ENCODE measurements at regions of chr4 and their contacts with region 1.

Region 1: DNA sequence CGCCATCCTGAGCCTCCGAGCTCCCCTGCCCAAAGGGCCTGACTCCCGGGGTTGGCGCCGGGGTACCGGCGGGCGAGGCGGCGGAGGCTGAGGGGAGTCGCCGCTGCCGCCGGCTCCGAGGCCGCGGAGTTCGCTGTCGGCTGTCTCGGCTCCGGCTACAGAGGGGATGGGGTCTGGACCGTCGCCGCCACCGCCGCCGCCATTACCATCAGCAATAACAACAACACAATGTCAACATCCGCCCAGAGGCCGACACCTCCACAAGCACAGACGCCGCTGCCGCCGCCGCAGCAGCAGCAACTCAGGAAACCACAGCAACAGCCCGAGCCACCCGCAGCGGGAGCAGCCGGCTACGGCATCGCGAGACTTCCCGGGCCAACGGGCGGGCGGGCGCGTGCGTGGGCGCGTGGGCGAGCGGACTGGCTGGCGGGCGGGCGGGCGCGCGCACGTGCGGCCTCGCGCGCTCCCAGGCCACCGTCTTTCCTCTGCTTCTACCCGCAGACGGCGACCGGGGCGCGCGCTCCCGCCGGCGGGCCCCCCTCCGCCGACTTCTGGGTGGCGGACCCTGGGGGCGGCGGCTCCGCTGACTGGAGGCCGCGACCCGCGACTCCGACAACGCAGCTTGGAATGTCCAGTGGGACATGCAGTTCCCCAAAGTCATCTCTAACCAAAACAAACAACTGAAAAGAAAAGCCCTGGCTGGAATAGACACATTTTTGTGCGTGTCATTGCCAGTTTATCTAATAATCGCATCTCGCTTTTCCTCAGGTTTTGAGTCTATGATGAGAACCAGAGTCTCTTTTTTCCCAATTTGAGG is at the start of gene CHIC2:
- DNase-seq: peak; percentile 94 to 99 (median 97)
- ATAC-seq: peak; percentile 86
- H3K4me3 ChIP-seq: peak within 1 kb of the TSS; percentile 91 to 99
- H3K4me3 Mint-ChIP-seq: peak within 1 kb of the TSS; percentile 96
- H3K27ac ChIP-seq: peak within 1 kb of the TSS; percentile 87 to 99
- H3K27ac Mint-ChIP-seq: peak within 1 kb of the TSS; percentile 99
- H3K4me1 ChIP-seq: peaks cover 35% of the 10 kb centered on the region
- H3K4me1 Mint-ChIP-seq: peaks cover 49% of the 10 kb centered on the region
- H3K27me3 ChIP-seq: no peaks in the 10 kb centered on the region
- H3K27me3 Mint-ChIP-seq: no peaks in the 10 kb centered on the region
- CTCF ChIP-seq: no peak
- total RNA-seq, gene CHIC2: 67.3 to 69.3 TPM

Region 2: GRCh38 chr4:52712172-52712990 is 1352.1 kb before region 1 on chr4:
- CTCF ChIA-PET with region 1: no interaction called
- POLR2A ChIA-PET with region 1: no interaction called
- intact Hi-C with region 1: loop called in 1 of 2 experiments (anchors 10 kb)
- DNase-seq: peak; percentile 90 to 97 (median 95)
- ATAC-seq: peak; percentile 89
- H3K4me3 ChIP-seq: peak overlapping the region; percentile 58 to 76
- H3K4me3 Mint-ChIP-seq: peak overlapping the region; percentile 92
- H3K27ac ChIP-seq: peak overlapping the region; percentile 82 to 89
- H3K27ac Mint-ChIP-seq: peak overlapping the region; percentile 96
- H3K4me1 ChIP-seq: peaks cover 29% of the 10 kb centered on the region
- H3K4me1 Mint-ChIP-seq: peaks cover 43% of the 10 kb centered on the region
- H3K27me3 ChIP-seq: no peaks in the 10 kb centered on the region
- H3K27me3 Mint-ChIP-seq: no peaks in the 10 kb centered on the region
- CTCF ChIP-seq: no peak

Region 3: GRCh38 chr4:53365486-53366300 is 698.8 kb before region 1 on chr4 and contains the start of gene SCFD2:
- CTCF ChIA-PET with region 1: no interaction called
- POLR2A ChIA-PET with region 1: no interaction called
- intact Hi-C with region 1: loop called (anchors 2 to 5 kb)
- DNase-seq: peak; percentile 90 to 99 (median 97)
- ATAC-seq: peak; percentile 96
- H3K4me3 ChIP-seq: peak within 1 kb of the TSS; percentile 69 to 77
- H3K4me3 Mint-ChIP-seq: peak within 1 kb of the TSS; percentile 96
- H3K27ac ChIP-seq: peak within 1 kb of the TSS; percentile 76 to 89
- H3K27ac Mint-ChIP-seq: peak within 1 kb of the TSS; percentile 97
- H3K4me1 ChIP-seq: peaks cover 46% of the 10 kb centered on the region
- H3K4me1 Mint-ChIP-seq: peaks cover 59% of the 10 kb centered on the region
- H3K27me3 ChIP-seq: peaks cover 0 to 4% of the 10 kb centered on the region in 2 experiments
- H3K27me3 Mint-ChIP-seq: peaks cover 5% of the 10 kb centered on the region
- CTCF ChIP-seq: no peak
- total RNA-seq, gene SCFD2: 11.0 to 13.7 TPM

Region 4: DNA sequence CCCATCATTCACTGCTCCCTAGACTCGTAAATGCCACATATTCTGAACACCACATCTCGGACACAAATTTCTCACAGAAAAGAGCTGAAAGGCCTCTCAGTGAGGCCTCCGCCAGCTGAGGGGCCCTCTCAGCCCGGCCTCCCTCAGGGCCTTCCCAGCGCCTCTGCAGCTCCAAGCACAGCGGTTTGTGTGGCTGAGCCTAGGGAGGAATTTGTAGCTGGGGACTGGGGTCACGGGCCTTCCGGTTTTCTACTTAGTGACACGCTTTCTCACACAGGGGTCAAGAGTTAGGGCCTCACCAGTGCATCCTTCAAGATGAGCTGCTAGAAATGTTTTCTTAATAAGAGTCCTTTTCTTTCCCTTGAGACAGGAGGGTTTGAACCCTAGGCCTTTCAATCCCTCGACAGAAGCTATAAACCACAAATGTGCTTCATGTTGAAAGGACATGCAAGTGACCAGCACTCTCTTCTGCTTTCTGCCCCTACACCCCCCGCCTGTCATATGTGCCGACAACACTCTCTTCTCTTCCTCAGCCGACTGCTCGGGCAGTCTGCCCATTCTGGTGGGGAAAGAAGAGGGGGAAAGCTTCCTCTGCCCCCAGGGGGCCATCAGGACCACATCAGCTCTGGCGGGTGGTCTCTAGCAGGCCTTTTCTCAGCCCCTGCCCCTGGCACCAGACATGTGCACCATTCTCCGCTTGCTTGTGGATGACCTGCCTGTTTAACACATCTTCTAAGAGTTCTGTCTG is 105.0 kb before region 1 on chr4:
- CTCF ChIA-PET with region 1: no interaction called
- POLR2A ChIA-PET with region 1: no interaction called
- intact Hi-C with region 1: no loop called
- DNase-seq: no peak
- ATAC-seq: no peak
- H3K4me3 ChIP-seq: no peak overlapping the region
- H3K4me3 Mint-ChIP-seq: no peak overlapping the region
- H3K27ac ChIP-seq: no peak overlapping the region
- H3K27ac Mint-ChIP-seq: no peak overlapping the region
- H3K4me1 ChIP-seq: no peaks in the 10 kb centered on the region
- H3K4me1 Mint-ChIP-seq: no peaks in the 10 kb centered on the region
- H3K27me3 ChIP-seq: no peaks in the 10 kb centered on the region
- H3K27me3 Mint-ChIP-seq: no peaks in the 10 kb centered on the region
- CTCF ChIP-seq: no peak

Region 5: DNA sequence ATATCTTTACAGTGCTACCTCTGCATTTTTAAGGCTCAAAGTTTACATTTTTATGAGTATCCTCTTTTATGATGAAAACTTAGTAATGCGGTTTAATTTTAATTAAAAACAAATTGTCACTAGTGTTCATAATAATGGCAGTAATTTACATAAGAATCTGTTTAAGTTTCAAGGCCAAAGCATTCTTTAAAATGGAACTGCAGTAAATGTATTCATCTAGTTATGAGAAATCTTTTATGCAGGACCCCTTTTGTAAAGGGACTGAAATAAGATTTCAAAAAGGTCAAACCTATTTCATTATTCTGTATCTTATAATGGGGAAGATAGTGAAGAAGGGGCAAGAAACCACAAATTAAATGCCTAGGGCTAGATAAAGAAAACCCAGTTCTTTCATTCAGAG is 37.2 kb before region 1 on chr4:
- CTCF ChIA-PET with region 1: no interaction called
- POLR2A ChIA-PET with region 1: no interaction called
- intact Hi-C with region 1: loop called in 1 of 2 experiments (anchors 5 kb)
- DNase-seq: no peak
- ATAC-seq: no peak
- H3K4me3 ChIP-seq: no peak overlapping the region
- H3K4me3 Mint-ChIP-seq: no peak overlapping the region
- H3K27ac ChIP-seq: no peak overlapping the region
- H3K27ac Mint-ChIP-seq: no peak overlapping the region
- H3K4me1 ChIP-seq: no peaks in the 10 kb centered on the region
- H3K4me1 Mint-ChIP-seq: peaks cover 33% of the 10 kb centered on the region
- H3K27me3 ChIP-seq: no peaks in the 10 kb centered on the region
- H3K27me3 Mint-ChIP-seq: no peaks in the 10 kb centered on the region
- CTCF ChIP-seq: no peak

Region 6: GRCh38 chr4:54318904-54319303 is 254.4 kb after region 1 on chr4:
- CTCF ChIA-PET with region 1: no interaction called
- POLR2A ChIA-PET with region 1: no interaction called
- intact Hi-C with region 1: no loop called
- DNase-seq: peak in 2 of 9 experiments; percentile 15 to 38
- ATAC-seq: peak; percentile 40
- H3K4me3 ChIP-seq: no peak overlapping the region
- H3K4me3 Mint-ChIP-seq: no peak overlapping the region
- H3K27ac ChIP-seq: no peak overlapping the region
- H3K27ac Mint-ChIP-seq: no peak overlapping the region
- H3K4me1 ChIP-seq: no peaks in the 10 kb centered on the region
- H3K4me1 Mint-ChIP-seq: no peaks in the 10 kb centered on the region
- H3K27me3 ChIP-seq: no peaks in the 10 kb centered on the region
- H3K27me3 Mint-ChIP-seq: peaks cover 2% of the 10 kb centered on the region
- CTCF ChIP-seq: peak; percentile 54

Region 7: GRCh38 chr4:54941994-54942552 is 877.6 kb after region 1 on chr4:
- CTCF ChIA-PET with region 1: no interaction called
- POLR2A ChIA-PET with region 1: no interaction called
- intact Hi-C with region 1: loop called in 1 of 2 experiments (anchors 5 kb)
- DNase-seq: peak; percentile 18 to 78 (median 34)
- ATAC-seq: peak; percentile 79
- H3K4me3 ChIP-seq: peak overlapping the region in 1 of 2 experiments; percentile 12
- H3K4me3 Mint-ChIP-seq: peak overlapping the region; percentile 71
- H3K27ac ChIP-seq: peak overlapping the region; percentile 59 to 72
- H3K27ac Mint-ChIP-seq: peak overlapping the region; percentile 98
- H3K4me1 ChIP-seq: peaks cover 40% of the 10 kb centered on the region
- H3K4me1 Mint-ChIP-seq: peaks cover 56% of the 10 kb centered on the region
- H3K27me3 ChIP-seq: no peaks in the 10 kb centered on the region
- H3K27me3 Mint-ChIP-seq: no peaks in the 10 kb centered on the region
- CTCF ChIP-seq: no peak

Region 8: DNA sequence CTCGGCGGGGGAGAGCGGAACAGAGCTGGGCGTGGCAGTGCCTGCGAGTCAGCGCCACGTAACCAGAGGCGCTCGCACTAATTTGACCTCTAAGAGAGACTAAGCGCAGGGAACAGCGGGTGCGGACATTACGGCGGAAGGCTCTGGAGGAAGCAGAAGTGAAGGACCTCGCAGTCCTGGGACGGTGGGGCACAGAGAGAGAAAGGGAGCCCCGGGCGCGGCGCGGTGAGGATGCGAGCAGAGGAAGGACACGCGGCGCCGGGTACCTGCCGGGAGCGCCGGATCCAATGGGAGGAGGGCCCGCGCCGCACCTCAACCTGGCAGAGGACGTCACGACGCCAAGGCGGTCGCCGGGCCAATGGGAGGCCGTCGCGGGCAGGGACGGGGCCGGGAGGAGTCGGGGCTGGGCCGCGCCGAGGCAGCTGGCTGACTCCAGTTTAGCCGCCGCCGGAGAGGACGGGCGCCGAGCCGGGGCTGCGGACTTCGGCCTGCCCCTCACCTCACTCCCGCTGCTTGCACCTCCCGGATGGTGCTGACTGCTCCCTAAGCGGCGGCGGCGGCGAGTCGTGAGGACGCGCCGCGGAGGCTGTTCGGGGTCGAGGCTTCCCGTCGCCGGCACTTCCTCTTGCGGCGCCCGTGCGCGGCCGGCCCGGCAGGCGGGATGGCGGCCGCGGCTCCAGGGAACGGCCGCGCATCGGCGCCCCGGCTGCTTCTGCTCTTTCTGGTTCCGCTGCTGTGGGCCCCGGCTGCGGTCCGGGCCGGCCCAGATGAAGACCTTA is 1331.2 kb after region 1 on chr4 and contains the start of gene TMEM165:
- CTCF ChIA-PET with region 1: no interaction called
- POLR2A ChIA-PET with region 1: no interaction called
- intact Hi-C with region 1: loop called in 1 of 2 experiments (anchors 10 kb)
- DNase-seq: peak; percentile 72 to 93 (median 86)
- ATAC-seq: peak; percentile 94
- H3K4me3 ChIP-seq: peak within 1 kb of the TSS; percentile 68 to 74
- H3K4me3 Mint-ChIP-seq: peak within 1 kb of the TSS; percentile 97
- H3K27ac ChIP-seq: peak within 1 kb of the TSS; percentile 83 to 93
- H3K27ac Mint-ChIP-seq: peak within 1 kb of the TSS; percentile 98
- H3K4me1 ChIP-seq: peaks cover 36% of the 10 kb centered on the region
- H3K4me1 Mint-ChIP-seq: peaks cover 38% of the 10 kb centered on the region
- H3K27me3 ChIP-seq: no peaks in the 10 kb centered on the region
- H3K27me3 Mint-ChIP-seq: no peaks in the 10 kb centered on the region
- CTCF ChIP-seq: peak; percentile 0
- total RNA-seq, gene TMEM165: 31.0 to 31.5 TPM